Breast epithelium (tissue), 4 donors: ENCODE measurements at regions of chr10 and their contacts with region 1.

Region 1: GRCh38 chr10:133087679-133088178 is at the start of gene ADGRA1:
- DNase-seq: no peak
- H3K4me3 ChIP-seq: peak within 1 kb of the TSS in 1 of 3 donors; percentile 31
- H3K27ac ChIP-seq: no peak within 1 kb of the TSS
- H3K4me1 ChIP-seq: no peaks in the 10 kb centered on the region
- H3K27me3 ChIP-seq: peaks cover 0 to 95% of the 10 kb centered on the region in 2 donors
- CTCF ChIP-seq: no peak
- POLR2A ChIP-seq: no peak
- total RNA-seq, gene ADGRA1: 0.33 TPM in 1 of 3 donors, not detected in the others

Region 2: DNA sequence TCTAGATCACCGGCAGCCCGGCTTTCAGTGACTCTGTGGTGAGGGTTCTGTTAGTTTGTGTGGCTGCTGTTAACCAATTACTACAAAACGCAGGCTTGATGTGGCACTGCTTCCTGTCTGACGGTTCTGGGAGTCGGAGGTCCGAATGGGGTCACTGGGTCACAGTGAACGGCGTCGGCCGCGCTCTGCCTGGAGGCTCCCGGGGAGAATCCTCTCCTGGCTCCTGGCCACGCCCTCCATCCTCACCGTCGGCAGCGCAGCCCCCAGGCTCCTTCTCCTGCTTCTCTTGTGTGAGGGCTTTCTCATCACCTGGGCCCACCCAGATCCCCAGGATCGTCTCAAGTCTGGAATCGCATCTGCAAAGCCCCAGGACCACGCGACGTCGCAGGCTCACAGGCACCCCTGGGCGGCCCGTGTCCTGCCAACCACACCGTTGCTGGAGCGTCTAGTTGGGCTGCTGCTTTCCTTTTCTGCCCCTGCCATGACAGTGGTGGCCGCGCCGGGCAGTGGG is 270.0 kb before region 1 on chr10:
- intact Hi-C with region 1: no loop called
- DNase-seq: no peak
- H3K4me3 ChIP-seq: no peak overlapping the region
- H3K27ac ChIP-seq: no peak overlapping the region
- H3K4me1 ChIP-seq: no peaks in the 10 kb centered on the region
- H3K27me3 ChIP-seq: peaks cover 0 to 42% of the 10 kb centered on the region in 2 donors
- CTCF ChIP-seq: no peak
- POLR2A ChIP-seq: no peak

Region 3: DNA sequence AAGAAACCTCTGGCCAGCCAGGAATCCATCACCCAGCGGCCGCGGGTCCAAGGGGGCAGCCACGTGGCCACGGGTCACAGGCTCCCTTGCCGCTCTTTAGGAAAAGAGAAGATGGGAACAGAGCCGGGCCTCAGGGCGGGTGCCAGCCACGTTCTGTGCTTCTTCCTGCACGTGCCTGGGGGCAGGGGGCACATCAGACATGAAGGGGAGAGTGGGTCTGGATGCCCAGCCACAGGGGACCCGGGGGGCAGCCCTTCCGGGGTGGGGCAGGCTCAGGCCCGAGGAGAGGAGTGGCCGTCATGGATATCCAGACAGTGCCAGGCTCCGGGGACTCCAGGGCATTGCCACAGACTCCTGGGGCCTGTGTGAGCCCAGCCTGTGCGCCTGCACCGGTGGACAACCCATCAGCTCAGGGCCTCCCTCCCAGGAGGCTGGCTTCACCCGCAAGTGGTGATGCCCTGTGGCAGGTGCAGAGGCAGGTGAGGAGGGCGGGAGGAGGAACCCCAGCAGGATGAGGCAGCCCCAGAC is 31.0 kb before region 1 on chr10:
- intact Hi-C with region 1: loop called (anchors 1 kb)
- DNase-seq: no peak
- H3K4me3 ChIP-seq: no peak overlapping the region
- H3K27ac ChIP-seq: no peak overlapping the region
- H3K4me1 ChIP-seq: no peaks in the 10 kb centered on the region
- H3K27me3 ChIP-seq: peaks cover 0 to 66% of the 10 kb centered on the region in 2 donors
- CTCF ChIP-seq: no peak
- POLR2A ChIP-seq: no peak